Activated T-helper 1 cell treated with anti-CD3 and anti-CD28 coated beads, Interleukin-12 subunit alpha, Interleukin-12 subunit beta, Interleukin-2, Interleukin-4 antibody, amounts not matched to agents 30 ng/mL and 10 ng/mL and 1 ng/mL, durations not matched to agents 14 hours and 24 hours and 36 hours (primary cell): ENCODE measurements at regions of chr18 and their contacts with region 1.

Region 1: DNA sequence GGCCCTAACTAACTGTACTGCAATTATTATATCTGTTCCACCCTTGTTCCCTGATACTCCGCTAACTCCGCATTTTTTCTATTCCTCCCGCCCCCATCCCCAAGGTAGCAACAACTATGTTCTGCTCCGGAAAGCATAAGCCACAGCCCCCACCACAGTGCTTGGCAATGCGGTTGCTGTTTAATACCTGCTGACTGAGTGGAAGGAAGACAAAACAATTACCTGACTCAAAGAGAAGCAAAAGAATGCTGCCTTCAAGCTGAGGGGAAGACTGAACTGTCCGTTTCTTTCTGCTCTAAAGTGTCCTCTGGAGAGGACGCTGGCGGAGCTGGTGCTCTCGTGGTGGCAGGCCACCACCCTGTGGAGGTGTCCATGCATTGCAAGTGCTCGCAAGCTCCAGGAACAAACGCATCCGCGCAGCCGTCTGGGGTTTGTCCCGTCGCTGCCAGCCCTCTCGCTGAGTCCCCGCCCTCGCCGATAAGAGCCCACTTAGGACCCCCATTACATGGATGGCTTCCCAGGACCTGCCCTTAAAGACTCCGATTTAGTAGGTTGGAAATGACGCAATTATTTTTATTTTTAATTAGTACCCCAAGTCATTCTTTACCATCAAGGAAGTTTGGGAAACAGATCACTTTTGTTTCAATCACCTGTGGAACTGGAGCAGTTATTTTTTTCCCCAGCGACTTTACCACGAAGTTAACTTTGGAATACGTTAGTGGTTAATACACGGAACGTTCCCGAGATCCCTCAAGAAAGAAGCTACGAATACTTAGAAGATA is 1.6 kb upstream of the MYL12A start:
- DNase-seq: peak; percentile 79
- H3K4me3 Mint-ChIP-seq: peak overlapping the region; percentile 93
- H3K27ac Mint-ChIP-seq: peak overlapping the region; percentile 99
- H3K4me1 Mint-ChIP-seq: peaks cover 42% of the 10 kb centered on the region
- H3K27me3 Mint-ChIP-seq: peaks cover 2% of the 10 kb centered on the region

Region 2: DNA sequence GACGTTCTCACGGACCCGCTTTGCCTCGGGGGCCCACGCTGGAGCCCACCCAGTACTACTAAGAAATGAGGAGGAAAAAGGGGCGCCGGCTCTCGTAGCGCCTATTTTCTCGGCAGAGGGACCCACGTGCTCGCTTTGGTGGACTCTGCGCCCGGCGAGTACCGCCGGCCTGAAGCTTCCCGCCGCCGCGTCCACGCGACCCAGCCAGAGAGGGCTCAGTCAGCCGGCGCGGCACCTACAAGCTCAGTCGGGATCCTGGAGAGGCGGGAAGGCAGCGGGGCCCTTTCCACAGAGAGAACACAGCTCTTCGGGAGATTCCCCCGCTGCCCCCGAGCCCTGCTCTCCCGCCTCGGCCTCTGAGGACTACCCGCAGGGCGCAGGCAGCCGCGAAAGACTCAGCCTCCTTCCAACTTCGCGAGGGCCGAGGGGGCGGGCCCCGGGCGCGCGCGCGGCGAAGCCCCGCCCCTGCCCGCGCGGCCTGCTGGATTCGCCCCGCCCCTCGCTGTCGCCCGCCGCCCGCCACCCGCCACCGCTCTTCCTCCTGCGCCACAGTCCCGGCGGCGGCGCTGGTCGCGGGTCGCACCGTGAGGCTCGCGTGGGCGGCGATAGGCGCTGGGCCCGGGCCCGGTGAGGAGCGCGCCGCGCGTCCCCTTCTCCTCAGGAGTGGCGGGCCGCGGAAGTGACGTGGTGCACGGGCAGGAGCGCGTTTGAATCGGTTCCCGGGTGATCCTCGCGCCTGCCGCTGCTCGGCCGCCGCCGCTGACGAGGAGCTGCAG is 590.7 kb before region 1 on chr18 and contains the start of gene SMCHD1:
- intact Hi-C with region 1: loop called (anchors 1 kb)
- DNase-seq: peak; percentile 86
- H3K4me3 Mint-ChIP-seq: peak within 1 kb of the TSS; percentile 88
- H3K27ac Mint-ChIP-seq: peak within 1 kb of the TSS; percentile 96
- H3K4me1 Mint-ChIP-seq: peaks cover 36% of the 10 kb centered on the region
- H3K27me3 Mint-ChIP-seq: peaks cover 2% of the 10 kb centered on the region
- total RNA-seq, gene SMCHD1: 98.6 and 112 TPM in 2 replicates

Region 3: GRCh38 chr18:2932247-2933181 is 313.5 kb before region 1 on chr18:
- intact Hi-C with region 1: loop called (anchors 1 kb)
- DNase-seq: peak; percentile 29
- H3K4me3 Mint-ChIP-seq: no peak overlapping the region
- H3K27ac Mint-ChIP-seq: peak overlapping the region; percentile 82
- H3K4me1 Mint-ChIP-seq: peaks cover 38% of the 10 kb centered on the region
- H3K27me3 Mint-ChIP-seq: no peaks in the 10 kb centered on the region

Region 4: DNA sequence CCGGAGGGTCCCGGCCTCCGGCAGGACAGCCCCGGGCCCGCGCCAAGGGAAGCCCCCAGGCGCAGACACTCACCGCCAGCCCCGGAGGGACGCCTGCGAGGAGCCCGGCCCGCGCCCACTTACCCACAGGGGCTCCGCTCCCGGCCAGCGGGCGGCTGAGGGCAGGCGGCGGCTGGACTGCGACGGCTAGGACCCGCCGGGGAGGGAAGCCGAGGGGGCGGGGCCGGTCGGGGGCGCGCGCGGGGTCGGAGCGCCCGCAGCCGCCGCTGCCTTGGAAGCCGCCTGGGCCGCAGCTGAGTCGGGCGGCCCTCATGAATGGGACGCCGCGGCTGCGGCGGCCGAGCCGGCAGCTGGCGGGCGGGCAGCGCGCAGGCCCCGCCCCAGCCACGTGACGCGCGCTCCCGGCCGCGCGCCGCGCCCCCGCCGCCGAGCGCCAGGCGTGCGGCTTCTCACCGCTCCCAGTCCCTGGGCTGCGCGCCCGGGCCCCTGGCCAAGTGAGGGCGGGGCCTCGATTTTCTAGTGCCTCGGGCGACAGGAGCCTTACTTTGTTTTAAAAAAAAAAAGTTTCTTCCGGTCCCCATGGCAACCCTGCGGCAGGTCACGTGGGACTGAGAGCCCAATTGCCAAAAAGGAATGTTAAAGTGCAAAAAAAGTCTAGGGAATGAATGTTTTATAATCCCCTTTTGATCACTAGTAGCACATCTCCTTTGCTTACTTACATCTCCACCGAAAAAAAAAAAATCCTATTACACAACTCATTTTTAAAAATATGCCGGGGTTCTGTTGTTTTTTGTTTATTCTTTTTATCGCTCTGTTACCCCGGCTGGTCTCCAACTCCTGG is 232.9 kb before region 1 on chr18 and contains the start of gene LPIN2:
- intact Hi-C with region 1: loop called (anchors 1 kb)
- DNase-seq: peak; percentile 95
- H3K4me3 Mint-ChIP-seq: peak within 1 kb of the TSS; percentile 92
- H3K27ac Mint-ChIP-seq: peak within 1 kb of the TSS; percentile 90
- H3K4me1 Mint-ChIP-seq: peaks cover 65% of the 10 kb centered on the region
- H3K27me3 Mint-ChIP-seq: no peaks in the 10 kb centered on the region
- total RNA-seq, gene LPIN2: 86.6 and 91.8 TPM in 2 replicates

Region 5: DNA sequence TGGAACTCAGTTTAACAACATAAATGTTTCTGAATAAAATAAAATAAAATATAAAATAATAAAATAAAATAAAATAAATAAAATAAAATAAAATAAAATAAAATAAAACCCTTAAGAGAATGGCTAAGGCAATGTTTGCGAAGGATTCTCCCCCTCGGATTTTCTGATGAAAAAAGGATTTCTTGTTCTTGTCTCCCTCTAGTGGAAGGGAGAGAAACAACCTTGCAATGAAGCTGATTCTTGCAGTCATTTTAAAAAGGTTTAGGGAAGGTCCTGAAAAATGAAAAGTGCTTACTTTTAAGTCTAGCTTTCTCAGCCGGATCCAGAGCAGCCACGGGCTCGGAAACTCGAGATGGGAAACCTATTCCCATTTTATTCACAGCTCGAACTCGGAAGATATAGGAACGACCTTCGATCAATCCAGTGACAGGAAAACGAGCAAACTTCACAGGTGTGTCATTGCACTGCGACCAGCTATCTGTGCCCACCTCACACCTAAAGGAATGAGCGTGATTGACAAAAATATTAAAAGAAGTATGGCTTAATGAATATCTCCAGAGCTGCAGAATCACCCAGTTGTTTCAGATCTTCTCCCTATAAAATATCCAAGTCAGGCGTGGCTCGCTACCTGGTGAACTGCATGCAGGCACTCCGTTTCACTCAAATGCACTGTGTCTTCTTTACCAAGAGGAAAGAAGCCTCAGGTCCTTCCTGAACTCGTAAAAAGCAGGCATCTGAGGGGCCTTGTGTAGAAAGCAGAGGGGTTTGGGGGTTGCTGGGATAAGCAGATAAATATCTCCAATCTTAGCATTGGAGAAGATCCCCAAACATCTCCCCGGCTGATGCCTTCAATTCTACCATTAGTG is 94.4 kb before region 1 on chr18:
- intact Hi-C with region 1: loop called (anchors 1 kb)
- DNase-seq: no peak
- H3K4me3 Mint-ChIP-seq: no peak overlapping the region
- H3K27ac Mint-ChIP-seq: no peak overlapping the region
- H3K4me1 Mint-ChIP-seq: peaks cover 7% of the 10 kb centered on the region
- H3K27me3 Mint-ChIP-seq: peaks cover 7% of the 10 kb centered on the region

Region 6: DNA sequence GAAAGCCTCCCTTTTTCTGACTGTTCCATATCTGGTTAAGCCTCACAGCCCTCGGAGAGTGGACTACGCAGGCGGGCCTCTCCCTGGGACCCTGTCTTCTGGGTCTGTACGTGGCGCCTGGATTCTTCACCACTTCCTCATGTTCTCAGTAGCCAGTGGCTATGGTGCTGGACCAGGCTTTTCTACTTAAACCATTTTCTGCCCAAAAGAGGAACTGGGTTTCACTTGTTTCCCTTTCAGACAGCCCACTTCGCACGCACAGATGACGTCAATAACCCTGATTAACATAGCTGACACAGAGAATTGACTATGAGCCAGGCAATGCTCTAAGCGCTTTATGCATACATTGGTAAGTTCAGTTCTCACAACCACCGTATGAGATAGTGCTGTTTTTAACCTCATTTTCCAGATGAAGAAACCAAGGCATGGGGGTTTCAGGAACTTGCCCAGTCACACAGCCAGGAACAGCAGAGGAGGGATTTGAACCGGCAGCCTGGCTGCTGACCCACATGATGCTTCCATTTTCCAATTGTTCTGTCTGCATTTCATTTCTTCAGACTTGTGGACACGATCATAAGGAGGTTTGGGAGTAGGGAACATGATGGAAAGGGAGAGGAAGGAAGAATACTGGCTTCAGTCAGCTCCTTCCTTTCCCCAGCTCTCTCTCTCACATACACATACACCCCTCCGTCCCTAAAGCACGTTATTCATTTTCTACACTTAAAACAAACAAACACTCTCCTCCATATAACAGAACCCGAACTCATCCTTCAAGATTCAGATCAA is 67.9 kb before region 1 on chr18:
- intact Hi-C with region 1: no loop called
- DNase-seq: no peak
- H3K4me3 Mint-ChIP-seq: no peak overlapping the region
- H3K27ac Mint-ChIP-seq: no peak overlapping the region
- H3K4me1 Mint-ChIP-seq: peaks cover 8% of the 10 kb centered on the region
- H3K27me3 Mint-ChIP-seq: peaks cover 4% of the 10 kb centered on the region